Mammary epithelial cell (primary cell): ENCODE measurements at regions of chr22 and their contacts with region 1.

Region 1: DNA sequence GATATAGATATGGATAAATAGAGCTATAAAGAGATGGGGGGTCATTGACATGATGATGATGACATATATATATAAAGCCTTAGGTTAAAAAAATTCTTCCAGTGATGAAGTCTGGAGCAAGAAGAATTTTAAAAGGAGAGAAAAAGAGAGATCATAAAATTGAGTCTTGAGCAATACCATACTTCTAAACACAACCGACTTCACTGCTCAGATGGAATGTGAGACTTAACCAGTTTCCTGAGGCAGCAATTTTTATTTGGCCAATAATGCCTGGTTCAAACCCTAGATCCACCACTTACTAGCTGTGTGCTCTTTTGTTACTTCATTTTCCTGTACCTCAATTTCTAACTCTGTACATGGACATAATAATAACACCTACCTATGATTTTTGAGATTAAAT is 229.5 kb downstream of the TTC28 start:
- DNase-seq: no peak
- H3K4me3 ChIP-seq: no peak overlapping the region
- H3K27ac ChIP-seq: no peak overlapping the region
- H3K4me1 ChIP-seq: no peaks in the 10 kb centered on the region
- H3K27me3 ChIP-seq: peaks cover 1% of the 10 kb centered on the region
- CTCF ChIP-seq: no peak

Region 2: DNA sequence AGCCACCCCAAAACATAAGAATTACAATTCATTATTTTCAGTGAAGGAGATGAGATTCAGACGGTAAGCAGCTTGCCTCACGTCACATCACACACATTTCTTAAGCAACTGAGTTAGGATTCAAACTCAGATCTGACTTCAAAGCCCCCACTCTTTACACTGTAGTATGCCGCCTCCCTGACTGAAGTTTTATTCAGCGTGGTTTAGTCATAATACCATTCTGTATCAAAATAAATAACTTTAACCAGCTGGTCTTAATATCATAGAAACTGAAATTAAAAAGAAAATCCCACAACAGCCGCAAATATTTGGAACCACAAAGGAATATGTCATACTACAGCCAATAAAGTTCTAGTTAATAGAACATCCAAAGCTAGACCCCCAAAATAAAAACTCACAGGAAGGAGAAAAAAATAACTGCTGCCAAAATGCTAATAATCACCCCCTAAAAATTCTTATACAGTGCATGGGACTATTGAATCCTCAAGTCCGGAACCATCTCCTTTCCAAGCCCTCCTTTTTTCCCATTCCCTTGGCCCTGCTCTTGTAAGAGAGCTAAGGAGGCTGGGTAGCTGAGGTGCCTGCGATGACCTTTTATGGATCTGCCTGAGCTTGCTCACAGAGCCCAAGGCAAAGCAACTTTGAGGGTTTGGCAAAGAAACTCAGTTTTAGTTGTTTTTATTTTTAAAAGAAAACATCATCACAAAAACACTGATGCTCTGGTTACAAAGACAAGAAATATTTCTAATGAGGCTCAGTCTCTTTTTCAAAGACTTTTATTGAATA is 105.0 kb before region 1 on chr22:
- CTCF ChIA-PET with region 1: no interaction called
- dilution Hi-C with region 1: no loop called
- in situ Hi-C with region 1: no loop called
- intact Hi-C with region 1: no loop called
- DNase-seq: peak; percentile 61
- H3K4me3 ChIP-seq: no peak overlapping the region
- H3K27ac ChIP-seq: peak overlapping the region; percentile 26
- H3K4me1 ChIP-seq: peaks cover 10% of the 10 kb centered on the region
- H3K27me3 ChIP-seq: no peaks in the 10 kb centered on the region
- CTCF ChIP-seq: no peak

Region 3: DNA sequence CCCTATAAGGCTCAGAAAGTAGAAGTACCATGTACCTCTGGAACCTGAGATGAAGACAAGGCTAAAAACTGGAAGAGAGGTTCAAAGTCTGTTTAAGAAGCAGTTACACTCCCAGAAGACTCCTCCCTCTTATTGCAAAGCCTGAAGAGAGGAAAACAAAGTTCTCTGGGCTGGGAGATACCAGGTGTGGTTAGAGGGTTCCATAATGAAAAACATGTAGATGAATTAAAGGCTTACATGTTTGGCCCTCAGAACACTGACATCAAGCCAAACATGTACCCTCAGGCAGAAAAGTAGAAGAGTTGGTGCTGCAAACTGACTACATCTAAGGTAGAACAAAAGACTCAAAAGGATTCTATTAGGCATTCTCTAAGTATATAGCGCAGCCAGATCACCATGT is 24.2 kb after region 1 on chr22:
- CTCF ChIA-PET with region 1: no interaction called
- dilution Hi-C with region 1: no loop called
- in situ Hi-C with region 1: no loop called
- intact Hi-C with region 1: no loop called
- DNase-seq: no peak
- H3K4me3 ChIP-seq: no peak overlapping the region
- H3K27ac ChIP-seq: no peak overlapping the region
- H3K4me1 ChIP-seq: peaks cover 5% of the 10 kb centered on the region
- H3K27me3 ChIP-seq: peaks cover 2% of the 10 kb centered on the region
- CTCF ChIP-seq: no peak

Region 4: GRCh38 chr22:28570691-28571373 is 120.7 kb after region 1 on chr22:
- CTCF ChIA-PET with region 1: no interaction called
- dilution Hi-C with region 1: no loop called
- in situ Hi-C with region 1: no loop called
- intact Hi-C with region 1: loop called (anchors 10 kb)
- DNase-seq: no peak
- H3K4me3 ChIP-seq: no peak overlapping the region
- H3K27ac ChIP-seq: no peak overlapping the region
- H3K4me1 ChIP-seq: no peaks in the 10 kb centered on the region
- H3K27me3 ChIP-seq: peaks cover 1% of the 10 kb centered on the region
- CTCF ChIP-seq: no peak

Region 5: DNA sequence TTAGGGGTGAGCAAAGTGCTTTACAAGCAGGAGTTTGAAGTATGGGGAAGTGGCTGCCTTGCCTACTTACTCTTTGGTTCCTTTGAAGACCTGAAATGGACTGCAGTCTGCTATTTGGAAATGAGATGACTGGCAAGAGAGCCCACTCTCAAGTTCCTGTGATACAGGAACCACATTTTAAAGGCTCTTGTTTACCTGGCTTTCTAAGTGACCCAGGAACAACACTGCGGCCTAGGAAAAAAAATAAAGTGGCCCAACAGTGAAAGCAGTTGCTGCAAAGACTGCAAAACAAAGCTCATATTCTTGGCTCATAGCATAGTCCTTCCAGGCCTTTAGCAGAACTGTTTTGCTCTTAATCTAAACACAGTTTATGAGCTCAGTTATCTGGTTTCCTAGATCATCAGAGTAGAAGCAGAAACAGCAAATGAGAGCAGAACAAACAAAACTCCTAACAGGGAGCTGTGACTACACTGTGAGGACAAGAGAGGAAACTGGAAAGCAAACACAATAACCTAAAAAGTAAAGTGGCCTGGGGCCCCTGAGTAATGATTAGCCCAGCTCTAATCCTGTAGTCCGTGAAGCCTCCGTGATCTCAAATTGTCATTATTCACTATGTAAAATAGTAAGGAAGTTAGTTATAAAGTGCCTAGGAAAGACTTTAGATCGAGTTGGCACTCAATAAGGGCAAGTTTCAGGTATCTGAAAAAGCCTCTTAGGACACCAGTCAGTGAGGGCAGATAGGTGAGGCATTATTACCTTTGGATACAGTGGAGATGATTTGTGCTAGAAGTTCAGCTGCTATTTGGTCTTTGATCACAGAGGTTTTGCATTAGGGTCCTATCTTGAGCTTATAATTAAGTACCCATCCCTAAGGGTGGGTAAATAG is 333.9 kb after region 1 on chr22:
- CTCF ChIA-PET with region 1: no interaction called
- dilution Hi-C with region 1: no loop called
- in situ Hi-C with region 1: no loop called
- intact Hi-C with region 1: no loop called
- DNase-seq: no peak
- H3K4me3 ChIP-seq: no peak overlapping the region
- H3K27ac ChIP-seq: no peak overlapping the region
- H3K4me1 ChIP-seq: no peaks in the 10 kb centered on the region
- H3K27me3 ChIP-seq: no peaks in the 10 kb centered on the region
- CTCF ChIP-seq: no peak